ENCODE measurements at regions of chr16 and their contacts with region 1.

Region 1: DNA sequence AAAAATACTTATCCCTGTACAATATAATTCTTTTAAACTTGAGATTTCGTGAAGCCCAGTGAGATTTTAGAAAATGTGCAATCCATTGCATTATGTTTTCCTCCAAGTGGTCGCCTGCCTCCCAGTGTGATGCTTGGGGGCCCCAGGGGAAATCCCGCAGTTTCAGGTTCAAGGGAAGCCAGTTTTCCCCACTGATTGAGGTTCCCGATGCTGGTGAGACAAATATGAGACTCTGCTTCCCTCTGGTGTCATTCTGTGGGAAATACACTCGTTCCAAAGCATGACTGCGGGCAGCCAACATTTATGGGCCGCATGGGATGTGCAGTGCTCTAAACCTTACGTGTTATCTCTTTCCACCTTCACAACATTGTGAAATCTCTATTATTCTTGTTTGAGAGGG is 200.8 kb downstream of the PRKCB start:
- DNase-seq: peak; percentile 66

Region 2: DNA sequence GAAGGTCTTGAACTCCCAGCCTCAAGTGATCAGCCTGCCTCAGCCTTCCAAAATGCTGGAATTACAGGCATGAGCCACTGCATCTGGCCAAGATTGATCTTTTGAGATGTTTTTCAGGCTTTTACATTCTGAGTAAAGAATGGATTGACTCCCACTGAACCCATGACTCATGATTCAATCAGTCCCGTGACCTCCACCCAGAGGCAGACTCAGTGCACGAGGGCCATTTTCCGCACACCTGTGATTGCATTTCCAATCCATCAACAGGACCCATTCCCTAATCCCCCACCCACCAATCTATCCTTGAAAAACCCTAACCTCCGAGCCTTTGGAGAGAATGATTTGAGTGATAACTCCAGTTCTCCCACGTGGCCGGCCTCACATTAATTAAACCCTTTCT is 241.2 kb before region 1 on chr16:
- in situ Hi-C with region 1: loop called (anchors 10 kb)
- DNase-seq: no peak

Region 3: DNA sequence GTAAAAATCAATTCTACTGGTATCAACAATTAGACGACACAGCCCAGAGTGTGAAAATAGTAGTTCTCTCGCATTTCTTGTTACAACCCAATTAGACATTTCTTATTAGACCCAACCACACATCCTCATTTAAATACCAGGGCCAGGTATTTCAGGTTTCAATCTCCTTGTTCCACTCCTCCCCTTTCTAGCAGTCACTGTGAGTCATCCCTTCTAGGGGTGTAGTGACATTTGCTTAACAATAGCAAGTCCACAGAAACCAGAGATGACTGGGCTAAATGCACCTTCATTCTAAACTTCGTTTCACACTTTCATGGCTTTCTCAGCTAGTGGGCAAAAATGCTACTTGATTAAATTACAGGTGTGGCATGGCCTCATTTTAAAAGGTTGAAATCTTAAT is 102.7 kb after region 1 on chr16:
- in situ Hi-C with region 1: no loop called
- DNase-seq: no peak

Region 4: DNA sequence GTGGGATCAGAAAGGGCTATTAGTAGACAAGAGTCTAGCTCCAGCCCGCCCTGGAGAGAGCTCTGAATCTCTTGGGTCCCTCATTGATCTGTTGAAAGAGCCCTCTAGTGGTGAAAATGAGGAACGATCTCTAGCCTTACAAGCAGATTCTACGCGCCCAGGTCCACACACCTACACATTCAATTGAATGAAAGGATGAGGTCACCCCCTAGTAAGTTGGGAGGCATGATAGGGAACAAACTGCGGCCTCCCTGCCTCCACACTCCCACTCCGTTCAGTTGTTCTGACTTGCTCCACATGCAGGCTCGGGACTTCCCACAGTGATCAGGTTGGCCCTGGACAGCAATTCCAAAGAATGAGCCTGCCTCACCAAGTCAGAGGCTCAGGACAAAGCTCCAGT is 216.6 kb after region 1 on chr16:
- in situ Hi-C with region 1: no loop called
- DNase-seq: peak; percentile 62

Region 5: DNA sequence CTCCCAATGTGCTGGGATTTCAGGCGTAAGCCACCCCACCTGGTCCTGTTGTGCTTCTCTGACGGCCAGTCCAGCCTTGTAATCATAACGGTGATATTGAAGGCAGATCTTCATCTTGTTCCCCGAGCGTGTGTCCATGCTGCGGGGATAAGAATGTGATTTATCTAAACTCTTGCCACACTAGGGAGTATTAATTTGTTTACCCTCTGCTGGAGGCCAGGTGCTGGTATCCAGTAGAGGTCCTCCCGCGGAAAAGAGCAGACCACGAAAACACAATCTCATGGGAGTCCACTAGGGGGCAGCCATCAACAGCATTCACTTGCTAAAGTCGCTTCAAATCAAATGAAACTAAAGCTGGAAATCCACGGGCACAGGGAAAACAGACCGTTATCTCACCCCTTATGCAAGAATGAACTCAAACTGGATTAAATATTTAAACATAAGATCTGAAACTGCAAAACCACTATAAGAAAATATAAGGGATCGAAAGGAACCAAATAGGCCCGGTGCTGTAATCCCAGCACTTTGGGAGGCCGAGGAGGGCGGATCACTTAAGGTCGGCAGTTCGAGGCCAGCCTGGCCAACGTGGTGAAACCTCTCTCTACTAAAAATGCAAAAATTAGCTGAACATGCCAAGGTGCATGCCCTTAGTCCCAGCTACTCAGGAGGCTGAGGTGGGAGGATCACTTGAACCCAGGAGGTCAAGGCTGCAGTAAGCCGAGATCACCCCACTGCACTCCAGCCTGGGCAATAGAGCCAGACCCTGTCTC is 480.5 kb after region 1 on chr16:
- in situ Hi-C with region 1: no loop called
- DNase-seq: peak; percentile 86

Measured in KBM-7 (cell line).